ENCODE measurements at regions of chr20 and their contacts with region 1.

Region 1: GRCh38 chr20:45087097-45087790 is 13.7 kb downstream of the KCNS1 start:
- DNase-seq: no peak
- ATAC-seq: no peak
- H3K4me3 Mint-ChIP-seq: no peak overlapping the region
- H3K27ac Mint-ChIP-seq: no peak overlapping the region
- H3K4me1 Mint-ChIP-seq: peaks cover 12% of the 10 kb centered on the region
- H3K27me3 Mint-ChIP-seq: no peaks in the 10 kb centered on the region
- CTCF ChIP-seq: no peak

Region 2: GRCh38 chr20:45061244-45061643 is 26.0 kb before region 1 on chr20:
- CTCF ChIA-PET with region 1: no interaction called
- POLR2A ChIA-PET with region 1: no interaction called
- DNase-seq: no peak
- ATAC-seq: no peak
- H3K4me3 Mint-ChIP-seq: no peak overlapping the region
- H3K27ac Mint-ChIP-seq: no peak overlapping the region
- H3K4me1 Mint-ChIP-seq: peaks cover 8% of the 10 kb centered on the region
- H3K27me3 Mint-ChIP-seq: no peaks in the 10 kb centered on the region
- CTCF ChIP-seq: no peak

Region 3: DNA sequence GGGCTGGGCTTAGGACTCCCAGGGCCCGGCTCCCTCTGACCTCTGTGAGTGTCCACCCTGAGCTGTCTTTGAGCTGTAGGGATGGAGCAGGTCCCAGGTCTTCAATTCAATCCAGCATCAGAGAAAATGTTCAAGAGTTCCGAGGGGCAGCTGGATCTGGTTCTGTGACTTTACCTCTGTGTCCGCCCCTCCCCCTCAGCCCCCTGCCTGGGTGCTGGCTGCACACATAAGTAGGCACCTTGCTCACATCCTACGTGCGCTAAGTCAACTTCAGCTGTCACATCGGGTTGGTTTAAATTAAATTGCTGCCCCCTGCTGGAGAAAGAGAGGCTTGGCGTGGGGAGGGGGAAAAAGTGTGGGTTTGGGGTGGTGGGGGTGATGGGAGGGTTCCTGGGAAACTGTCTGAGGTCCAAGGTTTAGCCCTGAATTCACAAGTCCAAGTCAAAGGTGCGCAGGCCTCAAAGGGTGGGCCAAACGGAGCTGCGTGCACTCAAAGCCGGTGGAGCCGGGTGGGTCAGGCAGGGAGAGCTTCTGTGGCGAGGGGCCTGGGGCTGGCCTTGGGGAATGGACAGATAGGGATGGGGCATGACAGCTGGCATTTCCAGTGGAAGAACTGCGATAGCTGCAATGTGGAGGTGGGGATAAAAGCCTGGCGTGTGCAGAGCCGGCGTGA is 24.7 kb after region 1 on chr20:
- CTCF ChIA-PET with region 1: interaction called, 10 read pairs
- POLR2A ChIA-PET with region 1: no interaction called
- DNase-seq: peak; percentile 52
- ATAC-seq: peak; percentile 54
- H3K4me3 Mint-ChIP-seq: no peak overlapping the region
- H3K27ac Mint-ChIP-seq: no peak overlapping the region
- H3K4me1 Mint-ChIP-seq: peaks cover 8% of the 10 kb centered on the region; the same call in 1 of the 2 replicates
- H3K27me3 Mint-ChIP-seq: peaks cover 4% of the 10 kb centered on the region; the same call in 1 of the 2 replicates
- CTCF ChIP-seq: peak; percentile 71

Region 4: GRCh38 chr20:45149062-45149461 is 61.8 kb after region 1 on chr20:
- CTCF ChIA-PET with region 1: no interaction called
- POLR2A ChIA-PET with region 1: no interaction called
- DNase-seq: no peak
- ATAC-seq: no peak
- H3K4me3 Mint-ChIP-seq: no peak overlapping the region
- H3K27ac Mint-ChIP-seq: no peak overlapping the region
- H3K4me1 Mint-ChIP-seq: no peaks in the 10 kb centered on the region
- H3K27me3 Mint-ChIP-seq: peaks cover 48% of the 10 kb centered on the region
- CTCF ChIP-seq: no peak

Region 5: DNA sequence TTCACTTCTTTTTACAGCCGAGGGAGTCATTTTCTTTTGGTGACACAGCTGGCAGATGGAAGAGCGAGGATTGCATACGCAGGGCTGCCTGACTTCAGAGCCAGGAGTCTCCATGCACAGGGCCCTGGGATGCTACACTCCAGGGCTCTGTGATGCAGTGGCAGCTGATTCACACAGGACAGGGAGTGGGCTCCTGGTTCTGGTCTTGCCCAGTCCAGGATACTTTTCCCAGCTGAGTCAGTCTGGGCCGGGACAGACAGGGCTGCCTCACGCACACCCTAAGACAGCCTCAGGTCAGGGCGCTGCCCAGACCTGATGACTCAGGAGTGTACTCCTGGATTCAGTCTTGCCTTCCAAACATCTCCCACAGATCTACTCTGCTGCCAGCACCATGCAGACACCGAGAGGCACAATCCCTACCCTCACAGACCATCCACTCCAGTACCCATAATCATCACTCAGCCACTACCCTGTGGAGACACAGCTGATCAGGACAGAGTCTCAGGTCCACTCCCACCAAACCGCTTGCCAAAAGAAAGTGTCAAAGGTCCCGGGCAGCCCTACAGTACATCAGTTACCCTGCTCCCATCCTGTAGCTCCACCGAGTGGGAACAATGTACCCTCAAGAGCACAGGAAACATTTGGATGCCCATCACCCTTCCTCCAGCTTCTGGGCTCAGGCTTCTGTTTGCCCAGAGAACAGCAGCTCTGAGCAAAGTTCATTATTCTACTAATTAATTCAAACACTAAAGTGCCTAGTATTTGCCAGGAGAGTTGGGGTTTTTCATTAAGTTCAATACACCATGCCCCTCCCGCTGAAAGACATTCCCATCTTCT is 249.5 kb after region 1 on chr20:
- CTCF ChIA-PET with region 1: no interaction called
- POLR2A ChIA-PET with region 1: no interaction called
- DNase-seq: no peak
- ATAC-seq: no peak
- H3K4me3 Mint-ChIP-seq: no peak overlapping the region
- H3K27ac Mint-ChIP-seq: peak overlapping the region; percentile 95
- H3K4me1 Mint-ChIP-seq: peaks cover 60% of the 10 kb centered on the region
- H3K27me3 Mint-ChIP-seq: no peaks in the 10 kb centered on the region
- CTCF ChIP-seq: no peak

Measured in WTC11 (cell line).